PC-3 (cell line): ENCODE measurements at regions of chr12 and their contacts with region 1.

Region 1: GRCh38 chr12:131949431-131950181 is at the start of gene EP400:
- DNase-seq: peak; percentile 97
- ATAC-seq: peak; percentile 93
- H3K4me3 ChIP-seq: peak within 1 kb of the TSS; percentile 95
- H3K27ac ChIP-seq: no peak within 1 kb of the TSS
- H3K4me1 ChIP-seq: 0 out of 2 replicates have a peak, but pooled peaks cover 5% of the 10 kb centered on the region
- H3K27me3 ChIP-seq: no peaks in the 10 kb centered on the region
- CTCF ChIP-seq: peak; percentile 60
- total RNA-seq, gene EP400: 20.2 and 30.5 TPM in 2 replicates

Region 2: GRCh38 chr12:131699434-131699833 is 250.2 kb before region 1 on chr12:
- CTCF ChIA-PET with region 1: no interaction called
- POLR2A ChIA-PET with region 1: no interaction called
- intact Hi-C with region 1: no loop called
- DNase-seq: peak; percentile 74
- ATAC-seq: peak; percentile 58
- H3K4me3 ChIP-seq: no peak overlapping the region
- H3K27ac ChIP-seq: no peak overlapping the region
- H3K4me1 ChIP-seq: peaks cover 10% of the 10 kb centered on the region
- H3K27me3 ChIP-seq: peaks cover 8% of the 10 kb centered on the region; the same call in 1 of the 2 replicates
- CTCF ChIP-seq: no peak

Region 3: GRCh38 chr12:131836193-131836592 is 113.4 kb before region 1 on chr12:
- CTCF ChIA-PET with region 1: interaction called, 5 read pairs
- POLR2A ChIA-PET with region 1: no interaction called
- intact Hi-C with region 1: loop called (anchors 1 kb)
- DNase-seq: peak; percentile 33
- ATAC-seq: no peak
- H3K4me3 ChIP-seq: no peak overlapping the region
- H3K27ac ChIP-seq: no peak overlapping the region
- H3K4me1 ChIP-seq: peaks cover 16% of the 10 kb centered on the region; the same call in 1 of the 2 replicates
- H3K27me3 ChIP-seq: no peaks in the 10 kb centered on the region
- CTCF ChIP-seq: peak; percentile 89

Region 4: DNA sequence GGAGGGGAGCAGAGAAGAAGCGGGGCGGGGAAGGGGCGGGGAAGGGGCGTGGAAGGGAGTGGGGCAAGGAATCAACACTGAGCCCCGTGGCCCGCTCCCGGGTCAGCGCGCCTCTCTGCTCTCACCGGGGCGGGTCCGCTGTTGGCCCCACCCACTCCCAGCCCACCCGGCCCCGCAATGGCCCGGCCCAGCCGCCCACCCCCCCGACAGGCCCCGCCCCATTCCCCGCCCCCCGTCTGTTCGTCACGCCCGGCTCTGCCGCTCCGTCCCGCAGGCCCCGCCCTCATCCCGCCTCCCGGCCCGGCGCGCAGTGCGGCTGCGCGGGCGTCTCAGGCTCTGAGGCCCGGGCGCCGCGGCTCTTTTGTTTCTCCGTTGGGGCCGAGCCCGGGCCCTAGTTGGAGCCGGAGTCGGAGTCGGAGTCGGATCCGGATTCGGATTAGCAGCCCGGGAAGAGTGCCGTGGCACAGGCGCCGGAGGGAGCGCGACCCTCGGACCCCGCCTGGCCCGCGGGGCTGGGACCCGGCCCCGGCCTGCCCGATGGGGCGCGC is 55.2 kb before region 1 on chr12 and contains the start of gene ULK1:
- CTCF ChIA-PET with region 1: no interaction called
- POLR2A ChIA-PET with region 1: no interaction called
- intact Hi-C with region 1: loop called (anchors 1 kb)
- DNase-seq: peak; percentile 96
- ATAC-seq: peak; percentile 56
- H3K4me3 ChIP-seq: peak within 1 kb of the TSS; percentile 74
- H3K27ac ChIP-seq: peak within 1 kb of the TSS; percentile 88; the same call in 1 of the 2 replicates
- H3K4me1 ChIP-seq: peaks cover 19% of the 10 kb centered on the region
- H3K27me3 ChIP-seq: no peaks in the 10 kb centered on the region
- CTCF ChIP-seq: no peak
- total RNA-seq, gene ULK1: 15.7 and 29.5 TPM in 2 replicates

Region 5: GRCh38 chr12:131912518-131913294 is 36.9 kb before region 1 on chr12:
- CTCF ChIA-PET with region 1: no interaction called
- POLR2A ChIA-PET with region 1: no interaction called
- intact Hi-C with region 1: no loop called
- DNase-seq: peak; percentile 86
- ATAC-seq: peak; percentile 74
- H3K4me3 ChIP-seq: no peak overlapping the region
- H3K27ac ChIP-seq: no peak overlapping the region
- H3K4me1 ChIP-seq: peaks cover 25% of the 10 kb centered on the region
- H3K27me3 ChIP-seq: no peaks in the 10 kb centered on the region
- CTCF ChIP-seq: peak; percentile 31; the same call in 1 of the 2 replicates

Region 6: GRCh38 chr12:131928711-131929580 is 20.7 kb before region 1 on chr12 and contains the start of gene PUS1:
- CTCF ChIA-PET with region 1: no interaction called
- POLR2A ChIA-PET with region 1: no interaction called
- intact Hi-C with region 1: loop called (anchors 2 kb)
- DNase-seq: peak; percentile 96
- ATAC-seq: peak; percentile 83
- H3K4me3 ChIP-seq: peak within 1 kb of the TSS; percentile 90
- H3K27ac ChIP-seq: peak within 1 kb of the TSS; percentile 81
- H3K4me1 ChIP-seq: peaks cover 14% of the 10 kb centered on the region
- H3K27me3 ChIP-seq: no peaks in the 10 kb centered on the region
- CTCF ChIP-seq: no peak
- total RNA-seq, gene PUS1: 74.0 TPM in 2 replicates

Region 7: DNA sequence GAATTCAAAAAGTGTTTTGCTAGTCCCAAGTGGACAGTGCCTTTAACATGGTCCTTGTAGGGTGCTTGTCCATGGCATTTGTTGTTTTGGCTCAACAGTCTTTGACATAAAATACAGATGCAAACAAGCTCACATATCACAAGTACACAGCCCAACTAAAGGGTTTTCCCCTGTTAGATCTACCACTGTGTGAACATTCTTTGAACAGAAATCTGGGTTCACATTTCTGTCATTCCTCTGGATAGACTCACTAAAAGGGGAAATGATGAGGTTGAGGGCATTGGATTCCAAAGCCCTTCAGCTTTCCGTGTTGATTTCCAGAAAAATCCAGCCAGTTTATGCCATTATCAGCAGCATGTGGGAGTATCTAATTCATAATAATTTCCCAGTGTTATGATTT is 54.2 kb after region 1 on chr12:
- CTCF ChIA-PET with region 1: no interaction called
- POLR2A ChIA-PET with region 1: no interaction called
- intact Hi-C with region 1: loop called (anchors 1 kb)
- DNase-seq: no peak
- ATAC-seq: no peak
- H3K4me3 ChIP-seq: no peak overlapping the region
- H3K27ac ChIP-seq: no peak overlapping the region
- H3K4me1 ChIP-seq: no peaks in the 10 kb centered on the region
- H3K27me3 ChIP-seq: no peaks in the 10 kb centered on the region
- CTCF ChIP-seq: no peak